Activated CD4-positive, alpha-beta T cell treated with anti-CD3 and anti-CD28 coated beads, Interleukin-2, amount 10 ng/mL, durations not matched to agents 24 days and 14 days (primary cell): ENCODE measurements at regions of chr2 and their contacts with region 1.

Region 1: DNA sequence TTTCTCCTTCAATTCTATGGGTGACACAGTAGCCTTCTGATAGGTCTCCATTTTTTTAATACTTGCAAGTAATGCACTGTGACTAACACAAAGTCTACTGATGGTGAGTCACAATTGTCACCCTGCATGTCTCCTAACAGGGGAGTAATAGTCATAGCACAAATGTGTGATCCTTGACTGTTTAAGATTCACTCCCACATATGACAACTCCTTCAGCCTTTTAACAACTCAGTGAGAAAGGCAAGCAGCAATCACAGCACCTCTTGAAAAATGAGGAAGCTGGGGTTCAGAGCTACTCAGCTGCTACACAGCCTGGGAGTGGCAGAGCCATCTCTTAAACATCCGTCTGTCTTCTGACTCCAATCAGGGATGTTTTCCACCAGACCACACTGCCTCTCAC is 63.8 kb downstream of the EHD3 start:
- DNase-seq: no peak
- H3K4me3 Mint-ChIP-seq: no peak overlapping the region
- H3K27ac Mint-ChIP-seq: no peak overlapping the region
- H3K4me1 Mint-ChIP-seq: peaks cover 3% of the 10 kb centered on the region
- H3K27me3 Mint-ChIP-seq: peaks cover 27% of the 10 kb centered on the region

Region 2: DNA sequence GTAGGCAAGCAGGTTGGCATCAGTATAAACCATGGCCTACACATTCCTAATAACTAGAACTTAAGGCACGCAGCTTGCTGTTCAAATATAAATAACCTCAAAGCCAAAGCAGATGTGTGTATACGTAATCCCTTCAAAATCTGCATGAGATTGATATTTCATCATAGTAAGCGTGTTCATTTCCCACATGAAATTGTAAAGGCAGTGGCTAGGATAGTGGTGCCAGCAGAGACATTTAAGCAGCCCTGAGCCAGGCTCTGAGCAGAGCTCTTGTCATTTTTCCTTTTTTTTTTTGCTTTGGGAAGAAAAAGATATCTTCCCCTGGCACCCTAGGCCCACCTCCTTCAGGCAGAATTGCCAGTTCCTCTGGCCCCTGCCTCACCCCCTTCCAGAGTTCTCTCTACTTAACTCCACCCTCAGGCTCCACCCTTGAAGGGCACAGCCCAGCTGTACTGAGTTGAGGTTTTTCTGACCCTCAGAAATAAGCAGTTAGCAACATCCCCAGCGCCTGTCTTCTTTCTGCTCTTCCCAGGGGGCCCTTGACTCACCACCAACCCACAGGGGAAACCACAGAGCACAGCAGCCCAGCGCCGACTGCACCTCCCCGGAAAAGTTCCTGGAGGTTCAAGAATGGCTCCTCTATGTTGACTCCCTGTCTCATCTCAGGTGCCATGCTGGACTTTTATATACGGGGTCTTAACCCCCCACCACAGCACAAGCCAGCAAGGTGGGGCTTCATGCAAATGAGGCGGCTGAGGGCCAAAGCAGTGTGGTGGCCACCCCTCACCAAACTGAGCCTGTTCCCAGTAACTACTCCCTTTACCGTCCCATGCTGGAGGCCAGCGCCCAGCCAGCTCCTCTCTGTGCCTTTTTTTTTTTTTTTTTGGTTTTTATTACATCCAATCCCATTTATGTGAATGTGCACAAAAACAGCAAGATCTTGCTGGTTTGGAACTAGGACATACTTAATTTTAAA is 20.9 kb after region 1 on chr2:
- intact Hi-C with region 1: loop called (anchors 2 kb)
- DNase-seq: peak; percentile 85
- H3K4me3 Mint-ChIP-seq: peak overlapping the region; percentile 64
- H3K27ac Mint-ChIP-seq: peak overlapping the region; percentile 67
- H3K4me1 Mint-ChIP-seq: peaks cover 52% of the 10 kb centered on the region
- H3K27me3 Mint-ChIP-seq: peaks cover 2% of the 10 kb centered on the region

Region 3: DNA sequence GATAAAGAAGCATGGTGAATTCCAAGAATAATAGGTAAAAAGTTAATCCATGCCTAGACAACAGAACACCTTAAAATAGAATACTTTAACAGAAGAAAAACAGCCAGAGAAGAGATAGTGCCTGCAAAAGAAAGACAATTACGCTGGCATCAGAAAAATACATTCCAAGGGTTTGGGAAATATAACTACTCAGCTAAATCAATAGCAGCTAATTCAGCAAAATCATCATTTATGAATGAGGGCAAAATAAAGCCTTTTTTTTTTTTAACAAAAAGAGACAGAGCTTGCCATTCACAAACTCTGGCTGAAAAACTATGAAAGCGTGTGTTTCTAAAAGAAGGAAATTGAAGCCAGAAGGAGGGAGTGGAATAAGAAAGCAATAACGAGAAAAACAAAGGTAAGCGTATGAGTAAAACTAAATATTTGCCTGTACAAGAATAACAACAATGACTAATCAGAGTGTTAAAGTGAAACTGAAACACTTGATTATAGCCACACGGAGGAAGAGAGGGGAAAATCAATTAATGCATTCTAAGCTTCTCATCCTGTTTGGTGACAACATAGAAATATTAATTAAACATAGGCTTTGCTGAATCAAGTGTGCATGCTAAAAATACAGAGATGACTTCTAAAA is 26.4 kb after region 1 on chr2:
- intact Hi-C with region 1: loop called (anchors 1 kb)
- DNase-seq: no peak
- H3K4me3 Mint-ChIP-seq: peak overlapping the region; percentile 67
- H3K27ac Mint-ChIP-seq: peak overlapping the region; percentile 82
- H3K4me1 Mint-ChIP-seq: peaks cover 50% of the 10 kb centered on the region
- H3K27me3 Mint-ChIP-seq: peaks cover 13% of the 10 kb centered on the region